ENCODE measurements at regions of chr11 and their contacts with region 1.

Region 1: DNA sequence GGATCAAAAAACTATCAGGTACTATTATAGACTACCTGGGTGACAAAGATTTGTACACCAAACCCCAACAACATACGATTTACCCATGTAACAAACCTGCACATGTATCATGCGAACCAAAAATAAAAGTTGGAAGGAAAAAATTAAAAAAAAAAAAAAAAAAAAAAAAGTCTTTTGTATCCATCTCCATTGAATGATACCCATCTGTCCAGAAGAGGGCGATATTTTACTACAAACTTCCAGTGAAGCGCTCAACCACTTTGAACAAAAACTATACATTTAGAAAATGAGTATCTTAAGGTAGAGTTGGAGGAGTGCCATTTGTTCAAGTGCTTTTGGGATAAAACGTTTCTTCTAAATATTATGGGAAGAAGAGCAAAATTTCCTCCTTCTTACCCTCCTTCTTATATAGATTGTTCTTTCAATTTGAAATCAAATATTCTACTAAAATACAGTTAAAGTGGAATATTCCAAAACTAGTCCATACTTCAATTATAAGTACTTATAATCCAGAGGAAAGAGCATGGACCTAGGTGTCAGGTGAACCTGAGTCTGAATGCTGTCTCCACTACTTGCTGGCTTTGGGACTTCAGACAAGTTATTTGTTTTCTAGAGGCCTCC is 23.3 kb downstream of the ARL14EP start:
- DNase-seq: peak; percentile 12
- ATAC-seq: no peak
- H3K4me3 ChIP-seq: no peak overlapping the region
- H3K27ac ChIP-seq: no peak overlapping the region
- H3K4me1 ChIP-seq: no peaks in the 10 kb centered on the region
- H3K27me3 ChIP-seq: no peaks in the 10 kb centered on the region
- CTCF ChIP-seq: peak; percentile 60; the same call in 1 of the 2 replicates

Region 2: DNA sequence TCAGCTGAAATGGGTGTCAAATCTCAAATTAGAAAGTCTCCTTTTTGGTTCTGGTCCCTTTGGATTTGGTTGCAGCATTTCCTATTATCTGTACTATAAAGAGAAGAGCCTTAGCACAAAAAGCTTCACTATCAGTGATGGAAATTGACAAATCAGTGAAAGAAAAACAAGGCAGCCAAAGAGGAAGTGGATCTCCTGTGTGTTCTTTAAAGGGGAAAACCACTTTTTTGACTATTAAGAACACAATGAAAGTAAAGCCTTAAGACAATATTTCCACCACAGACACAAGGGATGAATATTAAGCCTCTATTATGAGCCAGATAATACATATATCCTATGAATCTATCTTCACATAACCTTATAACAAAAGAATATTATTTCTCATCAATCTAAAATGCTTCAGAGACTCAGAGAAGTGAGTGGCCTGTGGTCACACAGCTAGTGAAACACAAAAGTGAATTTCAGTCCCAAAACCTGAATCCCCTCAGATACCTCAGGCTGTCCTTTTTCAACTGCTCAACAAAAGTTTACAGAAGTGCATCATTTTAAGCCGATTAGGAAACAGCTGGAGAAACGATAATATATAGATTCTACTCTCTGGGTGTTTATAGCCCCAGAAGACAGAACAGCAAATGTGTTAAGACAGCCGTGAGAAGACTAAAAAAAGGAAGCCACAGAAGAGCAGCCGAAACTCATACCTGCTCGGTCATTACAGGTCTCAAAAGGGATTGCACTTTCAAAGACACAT is 139.8 kb before region 1 on chr11:
- CTCF ChIA-PET with region 1: no interaction called
- POLR2A ChIA-PET with region 1: no interaction called
- in situ Hi-C with region 1: no loop called
- intact Hi-C with region 1: no loop called
- DNase-seq: no peak
- ATAC-seq: no peak
- H3K4me3 ChIP-seq: no peak overlapping the region
- H3K27ac ChIP-seq: no peak overlapping the region
- H3K4me1 ChIP-seq: no peaks in the 10 kb centered on the region
- H3K27me3 ChIP-seq: no peaks in the 10 kb centered on the region
- CTCF ChIP-seq: no peak

Region 3: GRCh38 chr11:30225642-30226041 is 120.5 kb before region 1 on chr11:
- CTCF ChIA-PET with region 1: no interaction called
- POLR2A ChIA-PET with region 1: no interaction called
- in situ Hi-C with region 1: no loop called
- intact Hi-C with region 1: no loop called
- DNase-seq: no peak
- ATAC-seq: no peak
- H3K4me3 ChIP-seq: no peak overlapping the region
- H3K27ac ChIP-seq: no peak overlapping the region
- H3K4me1 ChIP-seq: no peaks in the 10 kb centered on the region
- H3K27me3 ChIP-seq: no peaks in the 10 kb centered on the region
- CTCF ChIP-seq: no peak

Region 4: DNA sequence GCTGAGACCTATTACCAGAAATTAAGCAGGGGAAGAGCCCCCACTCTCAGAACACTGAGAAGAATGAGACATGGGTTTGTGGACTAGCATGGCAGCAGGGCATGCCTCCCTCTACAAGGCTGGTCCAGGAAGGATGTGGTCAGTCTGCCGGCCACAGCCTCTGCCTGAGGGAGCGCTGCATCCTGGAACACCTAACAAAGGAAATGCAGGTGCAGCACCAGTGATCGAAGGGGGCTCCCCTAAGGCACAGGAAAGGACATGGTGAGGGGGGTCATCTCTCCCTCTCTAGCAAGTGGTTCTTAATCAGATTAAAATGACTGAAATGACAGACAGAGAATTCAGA is 63.9 kb before region 1 on chr11:
- CTCF ChIA-PET with region 1: no interaction called
- POLR2A ChIA-PET with region 1: no interaction called
- in situ Hi-C with region 1: no loop called
- intact Hi-C with region 1: no loop called
- DNase-seq: no peak
- ATAC-seq: no peak
- H3K4me3 ChIP-seq: no peak overlapping the region
- H3K27ac ChIP-seq: no peak overlapping the region
- H3K4me1 ChIP-seq: no peaks in the 10 kb centered on the region
- H3K27me3 ChIP-seq: no peaks in the 10 kb centered on the region
- CTCF ChIP-seq: no peak

Region 5: DNA sequence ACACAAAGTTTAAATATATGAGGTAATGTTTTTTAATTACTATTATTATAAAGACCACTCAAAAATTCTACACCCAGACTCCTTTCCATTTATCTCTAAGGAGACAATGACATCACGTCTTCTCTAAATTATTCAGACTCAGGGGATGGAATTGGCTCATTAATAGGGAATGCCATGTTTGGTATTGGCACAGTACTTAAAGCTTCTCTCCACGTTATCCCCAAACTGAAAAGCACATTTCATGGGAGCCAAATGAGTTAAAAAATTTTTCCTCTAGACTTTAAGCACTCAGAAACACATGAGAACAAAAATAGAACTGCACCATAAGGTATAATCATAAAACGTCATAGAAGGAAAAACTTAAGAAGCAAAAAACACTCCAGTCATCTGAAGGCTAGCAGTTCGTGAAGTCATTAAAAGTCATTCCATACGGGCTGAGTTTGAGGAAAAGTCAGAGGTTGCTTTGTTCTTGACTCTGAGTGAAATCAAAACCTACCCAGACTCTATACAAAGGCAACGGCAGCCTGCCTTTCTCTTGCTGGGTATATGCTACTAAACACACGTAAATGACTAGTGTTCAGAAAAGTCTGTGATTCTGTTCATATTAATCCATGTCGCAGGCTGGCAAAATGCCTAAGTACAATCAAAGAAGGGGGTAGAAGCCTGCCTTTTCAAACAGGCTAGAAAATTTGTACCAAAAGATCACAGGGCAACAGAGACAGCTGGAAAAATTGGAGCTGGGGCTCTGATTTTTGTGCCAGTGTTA is 248.7 kb after region 1 on chr11:
- CTCF ChIA-PET with region 1: no interaction called
- POLR2A ChIA-PET with region 1: no interaction called
- in situ Hi-C with region 1: no loop called
- intact Hi-C with region 1: loop called (anchors 10 kb)
- DNase-seq: no peak
- ATAC-seq: no peak
- H3K4me3 ChIP-seq: no peak overlapping the region
- H3K27ac ChIP-seq: no peak overlapping the region
- H3K4me1 ChIP-seq: no peaks in the 10 kb centered on the region
- H3K27me3 ChIP-seq: no peaks in the 10 kb centered on the region
- CTCF ChIP-seq: no peak

Region 6: GRCh38 chr11:30855383-30856006 is 509.3 kb after region 1 on chr11:
- CTCF ChIA-PET with region 1: no interaction called
- POLR2A ChIA-PET with region 1: no interaction called
- in situ Hi-C with region 1: no loop called
- intact Hi-C with region 1: loop called (anchors 1 kb)
- DNase-seq: peak; percentile 1
- ATAC-seq: no peak
- H3K4me3 ChIP-seq: no peak overlapping the region
- H3K27ac ChIP-seq: no peak overlapping the region
- H3K4me1 ChIP-seq: no peaks in the 10 kb centered on the region
- H3K27me3 ChIP-seq: no peaks in the 10 kb centered on the region
- CTCF ChIP-seq: peak; percentile 41; the same call in 1 of the 2 replicates

Region 7: GRCh38 chr11:30917859-30918478 is 571.8 kb after region 1 on chr11:
- CTCF ChIA-PET with region 1: no interaction called
- POLR2A ChIA-PET with region 1: no interaction called
- in situ Hi-C with region 1: no loop called
- intact Hi-C with region 1: loop called (anchors 1 kb)
- DNase-seq: peak; percentile 17
- ATAC-seq: peak; percentile 73; the same call in 1 of the 2 replicates
- H3K4me3 ChIP-seq: no peak overlapping the region
- H3K27ac ChIP-seq: no peak overlapping the region
- H3K4me1 ChIP-seq: no peaks in the 10 kb centered on the region
- H3K27me3 ChIP-seq: no peaks in the 10 kb centered on the region; the same call in 1 of the 2 replicates
- CTCF ChIP-seq: peak; percentile 69; the same call in 1 of the 2 replicates

Measured in Panc1 (cell line).